Esophagus muscularis mucosa (tissue), 4 donors: ENCODE measurements at regions of chr1 and their contacts with region 1.

Region 1: DNA sequence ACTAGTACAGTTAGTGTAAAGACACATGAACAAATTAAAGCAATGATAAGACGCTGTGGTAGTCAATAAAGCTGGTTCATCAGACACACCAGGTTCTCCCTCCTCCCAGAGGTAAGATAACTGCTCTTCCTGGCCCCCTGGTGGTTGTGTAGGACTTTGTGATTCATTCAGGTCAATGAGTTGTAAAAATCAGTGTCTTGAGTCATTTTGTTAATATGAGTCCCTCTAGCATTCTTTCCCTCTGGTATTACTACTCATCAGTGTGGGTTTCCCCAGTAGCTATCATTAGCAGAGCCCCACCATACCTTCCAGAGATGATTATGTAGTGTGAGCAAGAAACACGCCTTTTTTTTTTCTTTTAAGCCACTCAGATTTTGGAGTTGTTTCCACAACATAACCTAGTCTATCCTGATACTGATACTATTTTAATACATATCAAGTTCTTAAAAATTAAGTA is 3.6 kb upstream of the SETDB1 start:
- DNase-seq: no peak
- H3K4me3 ChIP-seq: no peak overlapping the region
- H3K27ac ChIP-seq: no peak overlapping the region
- H3K4me1 ChIP-seq: peaks cover 7 to 22% (median 12%) of the 10 kb centered on the region in 4 donors
- H3K27me3 ChIP-seq: no peaks in the 10 kb centered on the region
- CTCF ChIP-seq: peak; percentile 63 to 72 (median 72)
- EP300 ChIP-seq: no peak
- POLR2A ChIP-seq: no peak

Region 2: GRCh38 chr1:150808121-150808520 is 114.4 kb before region 1 on chr1 and contains the start of gene CTSK:
- intact Hi-C with region 1: no loop called
- DNase-seq: no peak
- H3K4me3 ChIP-seq: peak within 1 kb of the TSS; percentile 30 to 53 (median 41)
- H3K27ac ChIP-seq: peak within 1 kb of the TSS; percentile 29 to 46 (median 34)
- H3K4me1 ChIP-seq: peaks cover 0 to 24% (median 15%) of the 10 kb centered on the region in 4 donors
- H3K27me3 ChIP-seq: no peaks in the 10 kb centered on the region
- CTCF ChIP-seq: no peak
- EP300 ChIP-seq: no peak
- POLR2A ChIP-seq: no peak
- total RNA-seq, gene CTSK: 29.5 to 49.3 (median 32.7) TPM

Region 3: DNA sequence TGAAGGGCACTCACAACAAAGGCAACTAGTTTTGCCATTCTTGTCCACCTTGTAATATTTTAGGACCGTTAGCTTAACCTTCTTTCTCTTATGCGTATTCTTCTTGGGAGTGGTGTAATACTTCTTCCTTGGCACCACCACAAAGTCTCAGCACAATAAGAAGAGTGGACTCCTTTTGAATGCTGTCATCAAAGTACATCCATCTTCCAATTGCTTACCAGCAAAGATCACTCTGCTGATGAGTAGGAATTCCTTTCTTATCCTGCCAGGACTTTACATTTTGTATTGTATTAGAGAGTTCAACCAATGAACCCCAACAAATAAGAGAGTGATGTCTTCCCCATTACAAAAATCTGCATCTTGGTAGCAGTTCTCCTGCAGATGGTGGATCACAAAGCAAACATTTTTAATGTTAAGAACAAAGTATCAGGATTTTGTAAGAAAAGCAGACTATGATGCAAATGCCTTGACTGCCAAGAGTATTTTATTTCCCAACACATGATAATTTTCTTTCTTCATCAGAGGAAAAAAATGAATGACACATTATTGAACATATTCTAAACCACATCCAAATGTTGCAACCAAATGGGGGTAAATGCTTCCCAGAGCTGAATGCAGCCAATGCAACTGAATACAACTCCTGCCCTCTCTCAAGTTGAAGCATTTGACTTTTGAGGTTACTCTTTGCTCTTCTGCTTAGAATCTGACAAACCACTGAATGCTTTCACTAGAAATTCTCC is 41.0 kb before region 1 on chr1:
- intact Hi-C with region 1: loop called (anchors 5 kb)
- DNase-seq: no peak
- H3K4me3 ChIP-seq: no peak overlapping the region
- H3K27ac ChIP-seq: peak overlapping the region; percentile 38 to 68 (median 56)
- H3K4me1 ChIP-seq: peaks cover 0 to 8% (median 6%) of the 10 kb centered on the region in 4 donors
- H3K27me3 ChIP-seq: no peaks in the 10 kb centered on the region
- CTCF ChIP-seq: no peak
- EP300 ChIP-seq: no peak
- POLR2A ChIP-seq: no peak

Region 4: GRCh38 chr1:151146412-151147140 is 224.0 kb after region 1 on chr1 and contains the start of gene SEMA6C:
- intact Hi-C with region 1: no loop called
- DNase-seq: peak; percentile 96
- H3K4me3 ChIP-seq: peak within 1 kb of the TSS; percentile 67 to 88 (median 72)
- H3K27ac ChIP-seq: peak within 1 kb of the TSS; percentile 84 to 89 (median 87)
- H3K4me1 ChIP-seq: peaks cover 41 to 54% (median 49%) of the 10 kb centered on the region in 4 donors
- H3K27me3 ChIP-seq: no peaks in the 10 kb centered on the region
- CTCF ChIP-seq: no peak
- EP300 ChIP-seq: no peak
- POLR2A ChIP-seq: peak; percentile 56
- total RNA-seq, gene SEMA6C: 5.3 to 12.2 (median 7.3) TPM